Astrocyte of the cerebellum (primary cell): ENCODE measurements at regions of chr5 and their contacts with region 1.

Region 1: GRCh38 chr5:14339468-14339867 is 196.3 kb downstream of the TRIO start:
- DNase-seq: no peak
- H3K4me3 ChIP-seq: no peak overlapping the region
- CTCF ChIP-seq: no peak

Region 2: DNA sequence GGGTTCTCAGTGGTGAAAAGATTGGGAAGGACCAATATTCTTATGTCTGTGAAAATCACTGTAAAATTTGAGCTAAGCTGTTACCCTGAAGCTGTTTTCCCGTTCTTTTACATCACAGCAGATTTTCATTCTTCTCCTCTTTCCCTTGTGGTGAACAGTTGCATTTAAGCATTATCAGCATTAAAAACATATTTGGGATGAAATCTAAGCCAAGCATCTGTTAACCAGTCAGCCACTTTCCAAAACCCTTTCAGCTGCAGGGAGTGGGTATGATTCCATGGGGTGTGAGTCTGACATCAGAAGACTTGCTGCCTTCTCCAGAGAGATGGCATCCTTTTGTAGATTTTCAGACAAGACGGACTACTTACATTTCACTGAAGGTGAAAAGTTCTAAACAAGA is 99.1 kb before region 1 on chr5:
- in situ Hi-C with region 1: no loop called
- DNase-seq: no peak
- H3K4me3 ChIP-seq: no peak overlapping the region
- CTCF ChIP-seq: peak; percentile 3

Region 3: DNA sequence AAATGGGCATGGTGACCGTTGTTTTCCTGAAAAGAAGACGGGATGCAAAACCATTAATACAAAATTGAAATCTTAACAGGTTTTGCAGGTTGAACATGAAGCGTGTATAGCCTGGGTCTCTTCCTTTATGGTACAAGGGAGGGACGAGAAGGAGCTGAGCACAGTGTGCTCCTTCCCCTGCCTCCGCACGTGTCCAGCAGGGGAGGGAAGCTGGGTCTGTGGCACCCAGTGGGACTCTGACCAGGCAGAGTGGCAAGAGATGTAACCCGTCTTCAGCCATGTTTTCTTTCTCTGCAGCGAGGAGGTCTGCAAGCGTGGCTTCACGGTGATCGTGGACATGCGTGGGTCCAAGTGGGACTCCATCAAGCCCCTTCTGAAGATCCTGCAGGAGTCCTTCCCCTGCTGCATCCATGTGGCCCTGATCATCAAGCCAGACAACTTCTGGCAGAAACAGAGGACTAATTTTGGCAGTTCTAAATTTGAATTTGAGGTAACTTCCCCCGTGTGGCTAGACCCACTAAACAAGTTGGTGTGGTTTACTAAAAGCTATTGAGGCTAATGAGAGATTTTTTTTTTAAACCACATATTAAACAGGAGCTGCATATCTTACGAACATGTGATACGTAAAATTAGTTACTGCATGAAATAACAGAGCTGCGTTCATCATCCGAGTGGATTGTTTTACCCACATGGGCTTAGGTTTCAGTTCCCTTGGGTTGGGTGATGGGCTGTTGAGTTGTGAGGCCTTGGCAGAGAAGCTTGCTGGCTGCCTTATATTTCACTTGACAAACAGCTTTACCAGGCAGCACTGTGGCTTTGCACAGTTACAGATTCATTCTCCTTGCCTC is 52.7 kb before region 1 on chr5:
- in situ Hi-C with region 1: loop called (anchors 5 kb)
- DNase-seq: no peak
- H3K4me3 ChIP-seq: no peak overlapping the region
- CTCF ChIP-seq: no peak

Region 4: DNA sequence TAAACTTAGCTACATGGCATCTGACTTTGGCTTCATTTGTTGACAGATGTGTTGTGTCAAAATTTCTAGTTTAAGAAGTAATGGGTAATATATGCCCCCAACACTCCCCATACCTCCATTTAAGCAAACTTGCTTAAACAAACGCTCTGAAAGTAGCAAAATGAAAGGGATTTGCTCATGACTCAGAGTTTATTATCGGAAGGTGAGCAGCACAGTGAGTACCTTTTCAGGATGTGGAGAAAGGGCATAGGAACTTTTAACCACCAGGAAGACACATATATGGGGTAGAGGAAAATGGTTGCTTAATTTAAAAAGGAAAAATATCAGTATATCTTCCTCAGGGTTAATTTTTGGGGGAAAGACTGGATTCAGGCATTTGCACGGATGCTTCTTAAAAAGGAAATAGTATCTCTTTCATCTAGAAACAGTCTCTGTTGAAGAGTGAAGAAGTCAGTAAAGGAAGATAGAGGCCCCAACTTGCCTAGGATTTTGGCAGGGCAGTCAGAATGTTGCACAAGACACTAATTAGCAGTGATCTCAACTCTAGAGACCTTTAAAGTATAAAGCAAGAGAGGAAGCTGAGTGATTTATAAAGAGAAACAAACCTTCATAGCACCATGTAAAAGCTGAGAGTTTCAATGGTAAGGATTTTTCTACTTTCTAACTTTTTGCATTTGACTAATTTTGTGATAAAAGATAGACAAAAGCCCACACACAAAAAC is 41.2 kb before region 1 on chr5:
- in situ Hi-C with region 1: no loop called
- DNase-seq: no peak
- H3K4me3 ChIP-seq: no peak overlapping the region
- CTCF ChIP-seq: no peak

Region 5: DNA sequence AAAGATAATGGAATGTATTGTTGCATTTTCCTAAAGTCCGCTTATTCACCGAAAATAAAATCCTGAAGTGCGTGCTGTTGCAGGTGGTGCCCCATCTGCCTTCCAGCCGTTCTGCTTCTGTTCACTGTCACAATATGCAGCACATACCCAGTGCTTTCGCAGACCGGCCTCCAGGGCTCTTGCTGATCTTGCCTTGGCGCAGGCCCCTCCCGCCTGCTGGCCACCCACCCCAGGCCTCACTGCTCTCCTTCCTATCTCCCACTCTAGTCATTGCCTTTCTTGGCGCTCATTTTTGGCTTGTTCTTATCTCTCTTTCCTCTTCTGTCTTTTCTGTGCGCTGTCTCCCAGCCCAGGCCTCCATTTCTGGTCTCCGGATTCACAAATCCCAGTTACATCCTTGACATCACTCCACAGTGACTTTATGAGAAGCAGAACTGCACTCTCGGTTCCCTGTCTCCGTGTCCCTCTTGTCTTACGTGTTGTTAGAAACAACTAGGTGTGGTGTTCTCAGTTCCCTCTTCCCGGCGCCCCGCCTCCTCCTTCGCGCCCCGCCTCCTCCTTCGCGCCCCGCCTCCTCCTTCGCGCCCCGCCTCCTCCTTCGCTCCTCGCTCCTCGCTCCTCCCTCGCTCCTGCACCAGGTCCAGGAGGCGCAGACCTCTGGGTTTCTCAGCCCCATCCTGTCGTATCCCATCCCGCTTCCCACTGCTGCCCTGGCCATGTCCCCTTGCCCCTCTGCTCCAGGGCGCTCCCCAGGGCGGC is 40.5 kb after region 1 on chr5:
- in situ Hi-C with region 1: no loop called
- DNase-seq: no peak
- H3K4me3 ChIP-seq: no peak overlapping the region
- CTCF ChIP-seq: no peak